Activated CD8-positive, alpha-beta T cell treated with anti-CD3 and anti-CD28 coated beads for 36 hours (primary cell): ENCODE measurements at regions of chr10 and their contacts with region 1.

Region 1: GRCh38 chr10:94549257-94549656 is 3.7 kb downstream of the HELLS start:
- DNase-seq: no peak
- ATAC-seq: no peak
- H3K4me3 Mint-ChIP-seq: no peak overlapping the region
- H3K27ac Mint-ChIP-seq: no peak overlapping the region
- H3K4me1 Mint-ChIP-seq: peaks cover 14% of the 10 kb centered on the region
- H3K27me3 Mint-ChIP-seq: no peaks in the 10 kb centered on the region
- CTCF ChIP-seq: no peak

Region 2: DNA sequence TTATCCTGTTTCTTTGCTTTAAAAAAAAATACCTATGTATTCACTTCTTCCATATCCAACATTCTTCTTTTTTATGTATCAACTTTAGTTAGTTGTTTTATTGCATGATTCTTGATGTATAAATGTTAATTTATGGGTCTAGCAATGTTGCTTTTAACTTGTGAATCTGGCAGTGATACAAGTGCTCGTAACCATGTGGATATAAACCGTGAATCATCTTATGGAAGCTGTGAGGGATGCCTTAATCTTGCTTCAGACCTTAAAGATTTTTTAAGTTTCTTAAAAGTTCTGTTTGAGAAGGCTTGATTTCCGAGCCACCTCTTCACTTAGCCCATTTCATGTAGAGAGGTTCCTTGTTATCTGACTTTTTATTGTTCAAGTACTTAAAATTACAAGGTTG is 22.3 kb after region 1 on chr10:
- CTCF ChIA-PET with region 1: no interaction called
- POLR2A ChIA-PET with region 1: interaction called, 11 read pairs
- intact Hi-C with region 1: no loop called
- DNase-seq: no peak
- ATAC-seq: no peak
- H3K4me3 Mint-ChIP-seq: no peak overlapping the region
- H3K27ac Mint-ChIP-seq: no peak overlapping the region
- H3K4me1 Mint-ChIP-seq: no peaks in the 10 kb centered on the region
- H3K27me3 Mint-ChIP-seq: no peaks in the 10 kb centered on the region
- CTCF ChIP-seq: no peak